B cell (primary cell): ENCODE measurements at regions of chr19 and their contacts with region 1.

Region 1: DNA sequence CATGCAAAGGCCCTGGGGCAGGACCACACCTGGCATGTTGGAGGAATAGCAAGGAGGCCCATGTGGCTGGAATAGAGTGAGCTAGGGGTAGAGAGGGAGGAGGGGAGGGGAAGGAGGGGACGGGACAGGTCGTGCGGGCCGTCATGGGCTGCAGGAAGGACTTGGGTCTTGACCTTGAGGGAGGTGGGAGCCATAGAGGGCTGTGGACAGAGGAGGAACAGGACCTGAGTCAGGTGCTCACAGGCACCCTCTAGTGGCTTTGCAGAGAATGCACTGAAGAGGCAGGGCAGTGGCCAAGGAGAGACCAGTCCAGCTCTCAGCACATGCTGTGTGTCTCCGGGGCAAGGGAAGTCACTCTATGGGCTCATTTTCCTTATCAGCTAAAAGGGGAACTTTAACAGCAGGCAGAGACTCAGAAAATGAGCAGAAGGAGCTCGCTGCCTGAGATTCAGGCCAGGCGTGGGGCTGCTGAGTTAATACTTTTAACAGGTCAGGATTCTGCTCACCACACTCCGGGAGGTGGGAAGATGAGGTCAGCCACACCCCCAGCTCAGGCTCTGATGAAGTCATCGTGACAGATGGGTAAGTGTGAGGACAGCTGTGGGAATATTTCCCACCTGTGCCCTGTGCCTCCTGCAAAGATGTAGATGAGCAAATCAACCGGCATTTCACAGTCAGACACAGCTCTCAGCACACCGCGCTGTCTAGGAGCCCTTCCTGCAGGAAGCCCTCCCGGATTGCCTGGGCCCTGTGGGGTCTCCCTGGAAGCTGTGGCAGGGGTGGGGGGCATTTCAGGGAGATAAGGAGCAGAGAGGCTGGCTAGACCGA is 6.0 kb upstream of the TNFAIP8L1 start:
- DNase-seq: peak; percentile 65
- ATAC-seq: peak; percentile 55
- H3K4me3 ChIP-seq: no peak overlapping the region
- H3K4me3 Mint-ChIP-seq: peak overlapping the region; percentile 50
- H3K27ac ChIP-seq: no peak overlapping the region
- H3K27ac Mint-ChIP-seq: no peak overlapping the region
- H3K4me1 ChIP-seq: peaks cover 8 to 35% of the 10 kb centered on the region in 2 donors
- H3K4me1 Mint-ChIP-seq: peaks cover 17% of the 10 kb centered on the region
- H3K27me3 ChIP-seq: peaks cover 0 to 3% (median 0%) of the 10 kb centered on the region in 4 experiments
- H3K27me3 Mint-ChIP-seq: peaks cover 13% of the 10 kb centered on the region
- CTCF ChIP-seq: peak; percentile 79

Region 2: GRCh38 chr19:4576016-4576933 is 57.1 kb before region 1 on chr19:
- CTCF ChIA-PET with region 1: interaction called, 51 read pairs
- POLR2A ChIA-PET with region 1: no interaction called
- intact Hi-C with region 1: loop called (anchors 1 kb)
- DNase-seq: peak; percentile 71
- ATAC-seq: peak; percentile 73
- H3K4me3 ChIP-seq: no peak overlapping the region
- H3K4me3 Mint-ChIP-seq: no peak overlapping the region
- H3K27ac ChIP-seq: no peak overlapping the region
- H3K27ac Mint-ChIP-seq: no peak overlapping the region
- H3K4me1 ChIP-seq: peaks cover 0 to 3% of the 10 kb centered on the region in 2 donors
- H3K4me1 Mint-ChIP-seq: no peaks in the 10 kb centered on the region
- H3K27me3 ChIP-seq: peaks cover 0 to 53% (median 21%) of the 10 kb centered on the region in 4 experiments
- H3K27me3 Mint-ChIP-seq: peaks cover 33% of the 10 kb centered on the region
- CTCF ChIP-seq: peak; percentile 72